ENCODE measurements at regions of chr6 and their contacts with region 1.

Region 1: DNA sequence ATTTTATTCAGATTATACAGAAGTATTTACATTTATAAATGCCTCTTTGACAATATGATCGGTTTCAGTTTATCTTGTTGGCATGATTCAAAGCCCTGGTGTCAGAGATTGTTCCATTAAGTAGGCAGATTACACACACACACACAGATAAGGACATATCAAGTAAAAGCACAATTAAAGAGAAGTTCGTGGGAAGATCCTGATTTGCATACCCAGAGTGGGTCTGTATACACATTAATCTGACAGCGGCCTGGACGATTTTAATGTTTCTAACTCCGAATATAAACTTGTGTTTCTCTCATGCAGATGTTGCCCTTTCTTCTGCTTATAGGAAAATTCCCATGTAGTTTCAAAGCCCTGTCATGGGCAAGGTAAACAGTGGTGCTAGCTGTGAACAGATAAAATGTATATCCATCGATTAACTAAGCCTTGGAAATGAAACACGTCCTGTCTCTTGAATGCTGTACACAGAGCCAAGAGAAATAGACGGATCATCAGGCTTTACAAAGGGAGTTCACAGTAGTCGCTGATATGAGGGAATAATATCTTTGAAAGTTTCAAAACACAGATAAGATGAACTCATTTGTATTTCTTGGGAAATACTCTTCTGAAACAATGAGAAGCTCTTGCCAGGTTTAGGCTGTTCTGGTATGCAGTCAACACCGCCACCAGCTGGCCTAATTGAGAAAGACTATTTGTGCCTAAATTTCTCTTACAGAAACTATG is 108.2 kb upstream of the GMDS start:
- DNase-seq: peak; percentile 66 to 83
- ATAC-seq: peak; percentile 89
- H3K4me3 ChIP-seq: no peak overlapping the region
- H3K27ac ChIP-seq: peak overlapping the region; percentile 61 to 93
- H3K4me1 ChIP-seq: peaks cover 0 to 6% of the 10 kb centered on the region in 2 donors
- H3K27me3 ChIP-seq: no peaks in the 10 kb centered on the region

Region 2: GRCh38 chr6:2196079-2196679 is 157.4 kb before region 1 on chr6:
- intact Hi-C with region 1: loop called in 1 of 2 experiments (anchors 10 kb)
- DNase-seq: no peak
- ATAC-seq: peak; percentile 80
- H3K4me3 ChIP-seq: no peak overlapping the region
- H3K27ac ChIP-seq: no peak overlapping the region
- H3K4me1 ChIP-seq: peaks cover 0 to 2% of the 10 kb centered on the region in 2 donors
- H3K27me3 ChIP-seq: no peaks in the 10 kb centered on the region

Region 3: DNA sequence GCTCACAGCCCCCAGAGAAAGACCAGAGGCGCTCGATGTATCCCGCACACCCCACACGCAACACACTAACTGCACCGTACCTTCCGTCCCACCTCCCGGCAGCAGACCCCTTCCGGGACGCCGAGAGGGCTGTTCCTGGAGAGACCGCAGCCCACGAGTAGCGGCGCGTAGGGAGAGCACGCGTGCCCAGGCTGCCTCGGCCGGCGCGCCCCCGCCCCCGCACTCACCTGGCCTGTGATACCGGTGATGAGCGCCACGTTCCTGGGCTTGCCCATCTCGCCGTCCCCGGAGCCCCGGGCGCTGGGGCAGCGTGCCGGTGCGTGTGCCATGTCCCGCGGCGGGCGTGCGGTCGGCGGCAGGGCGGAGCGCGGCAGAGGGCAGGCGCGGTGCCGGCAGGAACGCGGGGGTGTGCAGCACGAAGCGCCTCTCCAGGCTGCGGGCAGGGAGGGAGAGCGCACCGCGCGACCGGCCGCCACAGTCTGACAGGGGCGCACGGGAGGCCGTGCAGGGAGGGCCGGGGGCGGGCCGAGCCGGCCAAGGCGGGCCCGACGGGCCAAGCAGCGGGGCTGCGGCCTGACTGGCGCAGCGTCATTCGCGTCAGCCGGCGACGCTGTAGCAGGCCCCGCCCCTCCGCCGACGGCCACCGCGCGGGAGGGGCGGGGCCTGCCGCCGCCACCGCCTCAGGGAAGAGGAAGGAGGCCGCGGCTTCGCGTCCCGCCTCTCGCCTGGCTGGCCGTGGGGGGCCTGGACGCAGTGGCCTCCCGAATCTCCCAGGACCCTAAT is 108.3 kb before region 1 on chr6 and contains the start of gene GMDS:
- intact Hi-C with region 1: loop called in 1 of 2 experiments (anchors 10 kb)
- DNase-seq: peak; percentile 91 to 94
- ATAC-seq: peak; percentile 98
- H3K4me3 ChIP-seq: peak within 1 kb of the TSS; percentile 95 to 97
- H3K27ac ChIP-seq: peak within 1 kb of the TSS; percentile 68 to 91
- H3K4me1 ChIP-seq: no peaks in the 10 kb centered on the region
- H3K27me3 ChIP-seq: no peaks in the 10 kb centered on the region
- total RNA-seq, gene GMDS: 66.1 to 67.1 TPM